Calu3 (cell line): ENCODE measurements at regions of chr1 and their contacts with region 1.

Region 1: DNA sequence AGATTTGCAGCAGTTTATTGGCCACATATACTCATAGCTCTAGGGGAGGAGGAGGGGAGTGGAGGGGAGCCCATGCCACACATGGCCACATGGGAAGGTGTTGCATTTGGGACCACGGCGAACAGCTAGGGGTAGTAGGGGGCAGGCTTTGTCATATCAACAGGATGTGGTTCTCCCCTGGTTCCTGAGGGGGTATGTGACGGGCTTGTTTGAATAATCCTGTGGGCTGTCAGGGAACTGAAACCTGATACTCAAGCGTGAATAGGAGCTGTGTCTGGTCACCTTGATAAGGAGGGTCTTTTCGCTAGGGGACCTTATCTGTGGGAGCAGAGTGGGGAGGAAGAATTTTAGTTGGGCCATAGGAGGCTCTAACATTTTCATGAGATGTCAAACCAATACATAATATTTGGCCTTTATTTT is 264.7 kb downstream of the CTH start:
- DNase-seq: no peak
- H3K4me3 Mint-ChIP-seq: no peak overlapping the region
- H3K27ac Mint-ChIP-seq: no peak overlapping the region
- H3K4me1 Mint-ChIP-seq: no peaks in the 10 kb centered on the region
- H3K27me3 Mint-ChIP-seq: no peaks in the 10 kb centered on the region
- CTCF ChIP-seq: no peak

Region 2: GRCh38 chr1:70536708-70537366 is 138.9 kb before region 1 on chr1:
- CTCF ChIA-PET with region 1: no interaction called
- intact Hi-C with region 1: loop called (anchors 10 kb)
- DNase-seq: no peak
- H3K4me3 Mint-ChIP-seq: no peak overlapping the region
- H3K27ac Mint-ChIP-seq: no peak overlapping the region
- H3K4me1 Mint-ChIP-seq: no peaks in the 10 kb centered on the region
- H3K27me3 Mint-ChIP-seq: no peaks in the 10 kb centered on the region
- CTCF ChIP-seq: no peak